Natural killer cell (primary cell): ENCODE measurements at regions of chr11 and their contacts with region 1.

Region 1: DNA sequence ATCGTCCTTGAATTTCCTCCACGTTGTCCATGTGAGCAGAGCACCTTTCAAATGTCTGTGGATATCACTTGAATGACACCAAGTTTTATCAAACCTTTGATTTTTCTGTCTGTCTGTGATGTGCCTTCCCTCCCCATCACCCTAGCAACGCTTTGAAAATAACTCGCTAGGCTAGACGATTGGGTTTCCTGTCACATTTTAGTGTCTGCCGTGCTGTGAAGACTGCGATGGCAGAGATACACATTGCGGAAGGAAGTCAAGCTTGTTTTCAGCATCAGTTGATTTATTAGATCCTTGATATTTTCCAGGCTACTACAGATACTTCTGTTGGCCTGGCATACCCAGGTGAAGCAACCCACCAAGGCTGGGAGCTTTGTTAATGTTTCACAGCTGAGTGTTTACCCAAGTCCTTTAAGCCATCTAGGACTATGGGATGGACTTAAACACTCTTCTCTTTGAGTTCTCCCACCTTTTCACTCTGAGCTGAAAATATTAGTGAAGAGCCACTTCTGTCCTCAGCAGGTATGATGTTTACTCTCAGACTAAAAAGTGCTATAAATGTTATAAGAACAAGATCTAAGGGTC is 93.6 kb upstream of the CD44 start:
- DNase-seq: peak; percentile 59 to 97
- ATAC-seq: peak; percentile 69 to 90 (median 82)
- H3K4me3 ChIP-seq: no peak overlapping the region
- H3K4me3 Mint-ChIP-seq: peak overlapping the region; percentile 79
- H3K27ac ChIP-seq: peak overlapping the region; percentile 93
- H3K27ac Mint-ChIP-seq: peak overlapping the region; percentile 96 to 98
- H3K4me1 ChIP-seq: peaks cover 50% of the 10 kb centered on the region
- H3K4me1 Mint-ChIP-seq: peaks cover 59 to 65% of the 10 kb centered on the region in 2 donors
- H3K27me3 ChIP-seq: no peaks in the 10 kb centered on the region
- H3K27me3 Mint-ChIP-seq: peaks cover 2 to 4% of the 10 kb centered on the region in 2 donors
- CTCF ChIP-seq: no peak

Region 2: GRCh38 chr11:34749666-34750659 is 295.4 kb before region 1 on chr11:
- intact Hi-C with region 1: no loop called
- DNase-seq: no peak
- ATAC-seq: no peak
- H3K4me3 ChIP-seq: no peak overlapping the region
- H3K4me3 Mint-ChIP-seq: no peak overlapping the region
- H3K27ac ChIP-seq: no peak overlapping the region
- H3K27ac Mint-ChIP-seq: no peak overlapping the region
- H3K4me1 ChIP-seq: no peaks in the 10 kb centered on the region
- H3K4me1 Mint-ChIP-seq: no peaks in the 10 kb centered on the region
- H3K27me3 ChIP-seq: peaks cover 2% of the 10 kb centered on the region
- H3K27me3 Mint-ChIP-seq: peaks cover 18 to 20% of the 10 kb centered on the region in 2 donors
- CTCF ChIP-seq: no peak

Region 3: GRCh38 chr11:34970480-34970879 is 74.8 kb before region 1 on chr11:
- intact Hi-C with region 1: no loop called
- DNase-seq: no peak
- ATAC-seq: no peak
- H3K4me3 ChIP-seq: no peak overlapping the region
- H3K4me3 Mint-ChIP-seq: no peak overlapping the region
- H3K27ac ChIP-seq: no peak overlapping the region
- H3K27ac Mint-ChIP-seq: no peak overlapping the region
- H3K4me1 ChIP-seq: no peaks in the 10 kb centered on the region
- H3K4me1 Mint-ChIP-seq: no peaks in the 10 kb centered on the region
- H3K27me3 ChIP-seq: no peaks in the 10 kb centered on the region
- H3K27me3 Mint-ChIP-seq: no peaks in the 10 kb centered on the region
- CTCF ChIP-seq: no peak

Region 4: GRCh38 chr11:35013514-35014233 is 31.7 kb before region 1 on chr11:
- intact Hi-C with region 1: loop called (anchors 2 kb)
- DNase-seq: peak in 1 of 2 donors; percentile 78
- ATAC-seq: peak; percentile 73 to 79 (median 74)
- H3K4me3 ChIP-seq: no peak overlapping the region
- H3K4me3 Mint-ChIP-seq: no peak overlapping the region
- H3K27ac ChIP-seq: peak overlapping the region; percentile 73
- H3K27ac Mint-ChIP-seq: peak overlapping the region; percentile 52 to 68
- H3K4me1 ChIP-seq: peaks cover 21% of the 10 kb centered on the region
- H3K4me1 Mint-ChIP-seq: peaks cover 17 to 18% of the 10 kb centered on the region in 2 donors
- H3K27me3 ChIP-seq: no peaks in the 10 kb centered on the region
- H3K27me3 Mint-ChIP-seq: no peaks in the 10 kb centered on the region
- CTCF ChIP-seq: no peak

Region 5: GRCh38 chr11:35066783-35067423 is 21.6 kb after region 1 on chr11:
- intact Hi-C with region 1: loop called (anchors 1 kb)
- DNase-seq: peak in 1 of 2 donors; percentile 70
- ATAC-seq: peak; percentile 73 to 90 (median 84)
- H3K4me3 ChIP-seq: no peak overlapping the region
- H3K4me3 Mint-ChIP-seq: peak overlapping the region; percentile 73
- H3K27ac ChIP-seq: peak overlapping the region; percentile 38
- H3K27ac Mint-ChIP-seq: peak overlapping the region; percentile 81 to 84
- H3K4me1 ChIP-seq: peaks cover 25% of the 10 kb centered on the region
- H3K4me1 Mint-ChIP-seq: peaks cover 36 to 37% of the 10 kb centered on the region in 2 donors
- H3K27me3 ChIP-seq: no peaks in the 10 kb centered on the region
- H3K27me3 Mint-ChIP-seq: peaks cover 4 to 15% of the 10 kb centered on the region in 2 donors
- CTCF ChIP-seq: no peak

Region 6: GRCh38 chr11:35082321-35083182 is 37.2 kb after region 1 on chr11:
- intact Hi-C with region 1: loop called (anchors 1 kb)
- DNase-seq: peak; percentile 69 to 95
- ATAC-seq: peak; percentile 62 to 88 (median 78)
- H3K4me3 ChIP-seq: peak overlapping the region; percentile 2
- H3K4me3 Mint-ChIP-seq: peak overlapping the region; percentile 76
- H3K27ac ChIP-seq: peak overlapping the region; percentile 96
- H3K27ac Mint-ChIP-seq: peak overlapping the region; percentile 87 to 94
- H3K4me1 ChIP-seq: peaks cover 65% of the 10 kb centered on the region
- H3K4me1 Mint-ChIP-seq: peaks cover 66 to 75% of the 10 kb centered on the region in 2 donors
- H3K27me3 ChIP-seq: no peaks in the 10 kb centered on the region
- H3K27me3 Mint-ChIP-seq: peaks cover 0 to 6% of the 10 kb centered on the region in 2 donors
- CTCF ChIP-seq: no peak

Region 7: GRCh38 chr11:35144136-35144741 is 98.9 kb after region 1 on chr11:
- intact Hi-C with region 1: loop called (anchors 1 kb)
- DNase-seq: peak; percentile 46 to 86
- ATAC-seq: peak; percentile 49 to 71 (median 59)
- H3K4me3 ChIP-seq: peak overlapping the region; percentile 12
- H3K4me3 Mint-ChIP-seq: peak overlapping the region; percentile 83
- H3K27ac ChIP-seq: peak overlapping the region; percentile 80
- H3K27ac Mint-ChIP-seq: peak overlapping the region; percentile 86 to 88
- H3K4me1 ChIP-seq: peaks cover 80% of the 10 kb centered on the region
- H3K4me1 Mint-ChIP-seq: peaks cover 87 to 92% of the 10 kb centered on the region in 2 donors
- H3K27me3 ChIP-seq: no peaks in the 10 kb centered on the region
- H3K27me3 Mint-ChIP-seq: no peaks in the 10 kb centered on the region
- CTCF ChIP-seq: no peak

Region 8: DNA sequence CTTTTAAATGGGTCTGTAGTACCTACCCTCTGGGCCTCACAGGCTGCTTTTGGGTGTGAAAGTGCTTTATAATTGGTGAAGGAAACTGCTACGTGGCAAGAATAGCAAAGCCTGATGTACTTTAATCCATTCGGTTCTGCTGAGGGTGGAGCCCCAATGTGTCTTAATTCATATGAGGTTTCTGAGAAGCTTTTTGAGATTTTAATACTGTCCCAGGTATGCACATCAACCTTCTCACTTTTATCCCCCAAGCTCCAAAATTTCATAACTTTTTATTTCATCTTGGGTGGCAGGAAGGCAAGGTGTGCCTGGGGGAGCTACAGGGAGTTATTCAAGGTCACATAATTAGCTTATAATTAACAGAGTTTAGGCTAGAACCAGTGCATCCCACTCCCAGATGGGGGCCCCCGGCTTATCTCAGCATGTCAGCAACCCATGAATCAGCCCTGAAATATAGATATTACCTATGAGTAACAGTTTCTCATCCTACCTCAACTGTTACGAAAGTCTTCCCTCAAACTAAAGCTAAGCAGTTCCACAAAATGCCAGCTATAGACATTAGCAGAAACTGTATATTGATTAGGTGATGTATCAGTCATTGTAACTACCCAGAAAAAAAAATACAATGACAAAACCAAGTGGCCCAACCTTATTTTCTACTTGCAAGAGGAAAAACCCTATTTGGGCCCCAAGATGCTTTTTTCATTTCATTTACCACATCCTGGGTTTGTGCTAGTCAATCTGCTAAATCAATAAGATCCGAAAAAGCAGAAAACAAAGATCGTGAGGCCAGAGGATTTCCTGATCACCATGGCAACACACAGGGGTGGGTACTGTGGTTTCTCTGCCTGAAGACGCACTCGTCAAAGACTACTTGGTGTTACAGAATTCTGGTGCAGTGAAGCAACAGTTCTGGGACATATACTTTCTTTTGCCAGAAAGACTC is 120.4 kb after region 1 on chr11:
- intact Hi-C with region 1: loop called (anchors 1 kb)
- DNase-seq: peak; percentile 85 to 98
- ATAC-seq: peak; percentile 69 to 89 (median 88)
- H3K4me3 ChIP-seq: peak overlapping the region; percentile 21
- H3K4me3 Mint-ChIP-seq: peak overlapping the region; percentile 90
- H3K27ac ChIP-seq: peak overlapping the region; percentile 99
- H3K27ac Mint-ChIP-seq: peak overlapping the region; percentile 90 to 99
- H3K4me1 ChIP-seq: peaks cover 68% of the 10 kb centered on the region
- H3K4me1 Mint-ChIP-seq: peaks cover 97% of the 10 kb centered on the region in 2 donors
- H3K27me3 ChIP-seq: no peaks in the 10 kb centered on the region
- H3K27me3 Mint-ChIP-seq: no peaks in the 10 kb centered on the region
- CTCF ChIP-seq: no peak

Region 9: GRCh38 chr11:35246745-35247144 is 201.4 kb after region 1 on chr11:
- intact Hi-C with region 1: loop called (anchors 1 kb)
- DNase-seq: no peak
- ATAC-seq: no peak
- H3K4me3 ChIP-seq: no peak overlapping the region
- H3K4me3 Mint-ChIP-seq: peak overlapping the region; percentile 62
- H3K27ac ChIP-seq: peak overlapping the region; percentile 80
- H3K27ac Mint-ChIP-seq: peak overlapping the region; percentile 81 to 93
- H3K4me1 ChIP-seq: peaks cover 40% of the 10 kb centered on the region
- H3K4me1 Mint-ChIP-seq: peaks cover 37% of the 10 kb centered on the region in 2 donors
- H3K27me3 ChIP-seq: no peaks in the 10 kb centered on the region
- H3K27me3 Mint-ChIP-seq: no peaks in the 10 kb centered on the region
- CTCF ChIP-seq: no peak